Cardiac septum (tissue), 1 donor: ENCODE measurements at regions of chr6 and their contacts with region 1.

Region 1: GRCh38 chr6:43667245-43668150 is 20.1 kb downstream of the MRPS18A start:
- DNase-seq: peak; percentile 90

Region 2: DNA sequence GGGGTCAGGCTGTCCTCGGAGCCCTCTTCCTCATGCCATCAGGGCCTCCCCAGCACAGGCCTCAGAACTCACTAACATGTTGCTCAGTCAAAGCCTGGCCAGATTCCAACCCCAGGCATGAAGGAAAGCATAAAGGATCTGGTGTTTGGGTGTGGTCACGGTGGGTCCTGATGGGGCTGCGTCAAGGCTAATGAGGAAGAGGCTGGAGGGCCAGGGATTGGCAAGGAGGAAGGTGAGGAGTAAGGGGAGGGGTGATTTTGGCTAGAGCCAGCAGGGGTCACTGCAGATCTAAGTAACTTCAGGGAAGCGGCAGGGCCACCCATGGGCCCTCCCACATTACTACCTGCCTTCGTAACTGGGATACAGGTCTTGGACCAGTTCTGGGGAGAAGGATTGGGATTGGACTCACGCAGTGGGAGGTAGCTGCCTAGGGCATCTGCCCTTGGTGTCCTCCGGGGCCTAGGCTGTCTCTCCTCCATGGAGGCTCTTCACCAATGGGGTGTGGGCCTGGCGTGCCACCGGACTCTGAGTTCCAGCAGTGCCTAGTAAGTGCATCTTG is 56.3 kb after region 1 on chr6:
- intact Hi-C with region 1: loop called (anchors 5 kb)
- DNase-seq: peak; percentile 83

Region 3: GRCh38 chr6:44074439-44075136 is 407.1 kb after region 1 on chr6:
- intact Hi-C with region 1: loop called (anchors 1 kb)
- DNase-seq: no peak